PC-9 (cell line): ENCODE measurements at regions of chr1 and their contacts with region 1.

Region 1: DNA sequence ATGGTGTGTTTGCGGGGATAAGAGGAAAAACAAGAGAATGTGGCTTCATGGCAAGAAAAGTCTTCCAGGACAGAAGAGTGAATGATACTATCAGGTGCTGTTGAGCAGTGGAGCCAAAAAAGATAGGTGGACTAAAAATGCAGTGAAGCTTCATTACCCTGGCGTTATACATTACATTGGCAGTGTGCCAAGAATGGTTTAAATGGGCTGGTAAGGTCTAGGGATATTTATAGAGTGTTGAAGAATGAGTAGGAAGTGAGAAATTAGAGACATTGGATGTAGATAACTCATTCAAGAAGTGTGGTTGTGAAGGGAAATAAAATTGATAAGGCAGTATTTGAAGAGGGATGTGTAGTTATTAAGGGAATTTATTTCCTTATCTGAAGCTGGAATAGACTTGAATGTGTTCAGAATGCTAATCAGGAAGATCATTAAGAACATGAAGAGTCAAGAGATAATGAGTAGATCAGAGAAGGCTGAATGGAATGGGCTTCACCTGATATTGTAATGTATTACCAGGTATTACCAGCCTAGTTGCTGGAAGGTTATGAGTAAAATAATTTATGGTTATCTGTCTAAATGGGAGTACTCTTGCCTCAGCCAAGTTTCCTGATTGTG is 72.7 kb downstream of the MAST2 start:
- DNase-seq: no peak
- H3K4me3 ChIP-seq: no peak overlapping the region
- H3K27ac ChIP-seq: no peak overlapping the region
- H3K4me1 ChIP-seq: peaks cover 18% of the 10 kb centered on the region
- H3K27me3 ChIP-seq: no peaks in the 10 kb centered on the region
- CTCF ChIP-seq: no peak

Region 2: DNA sequence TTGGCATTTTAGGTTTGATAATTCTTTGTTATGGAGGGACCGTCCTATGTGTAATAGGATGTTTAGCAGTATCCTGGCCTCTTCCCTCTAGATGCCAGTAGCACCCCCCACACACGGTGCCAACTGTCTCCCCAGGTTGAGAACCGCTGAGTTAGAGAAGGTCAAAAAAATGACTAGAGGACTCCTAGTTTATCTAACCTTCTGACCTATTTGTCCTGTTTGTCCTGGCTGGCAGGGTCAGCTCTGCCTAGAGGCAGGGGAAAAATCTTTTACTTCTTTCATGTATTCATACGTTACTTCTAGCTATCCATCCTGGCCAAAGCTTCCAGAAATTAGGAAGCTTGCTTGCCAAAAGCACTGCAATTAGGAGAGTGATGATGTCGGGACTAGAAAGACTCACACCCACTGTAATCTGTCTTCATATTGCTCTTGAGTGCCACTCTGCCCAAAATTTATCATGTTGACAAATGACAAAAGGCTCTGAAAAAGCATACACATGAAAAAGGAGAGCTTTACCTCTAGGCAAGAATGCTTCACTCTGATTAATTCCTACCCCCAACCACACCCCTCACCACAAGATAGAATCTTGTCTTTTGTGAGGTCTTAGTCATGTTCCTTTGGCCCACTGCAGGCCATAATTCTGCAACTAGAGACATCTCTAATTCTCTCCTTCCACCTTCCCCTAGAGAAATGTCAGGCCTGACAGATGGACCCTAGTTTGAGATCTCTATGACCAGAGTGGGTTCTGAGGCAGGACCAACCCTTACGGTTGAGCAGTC is 339.9 kb before region 1 on chr1:
- CTCF ChIA-PET with region 1: no interaction called
- POLR2A ChIA-PET with region 1: no interaction called
- intact Hi-C with region 1: no loop called
- DNase-seq: no peak
- H3K4me3 ChIP-seq: no peak overlapping the region
- H3K27ac ChIP-seq: no peak overlapping the region
- H3K4me1 ChIP-seq: peaks cover 13% of the 10 kb centered on the region
- H3K27me3 ChIP-seq: no peaks in the 10 kb centered on the region
- CTCF ChIP-seq: no peak

Region 3: GRCh38 chr1:45617618-45618017 is 258.5 kb before region 1 on chr1:
- CTCF ChIA-PET with region 1: interaction called, 10 read pairs
- POLR2A ChIA-PET with region 1: no interaction called
- intact Hi-C with region 1: no loop called
- DNase-seq: no peak
- H3K4me3 ChIP-seq: no peak overlapping the region
- H3K27ac ChIP-seq: no peak overlapping the region
- H3K4me1 ChIP-seq: no peaks in the 10 kb centered on the region
- H3K27me3 ChIP-seq: no peaks in the 10 kb centered on the region
- CTCF ChIP-seq: no peak

Region 4: GRCh38 chr1:45730475-45731339 is 145.4 kb before region 1 on chr1:
- CTCF ChIA-PET with region 1: no interaction called
- POLR2A ChIA-PET with region 1: no interaction called
- intact Hi-C with region 1: loop called (anchors 10 kb)
- DNase-seq: peak; percentile 37 to 89
- H3K4me3 ChIP-seq: no peak overlapping the region
- H3K27ac ChIP-seq: peak overlapping the region; percentile 23
- H3K4me1 ChIP-seq: peaks cover 28% of the 10 kb centered on the region
- H3K27me3 ChIP-seq: no peaks in the 10 kb centered on the region
- CTCF ChIP-seq: no peak

Region 5: DNA sequence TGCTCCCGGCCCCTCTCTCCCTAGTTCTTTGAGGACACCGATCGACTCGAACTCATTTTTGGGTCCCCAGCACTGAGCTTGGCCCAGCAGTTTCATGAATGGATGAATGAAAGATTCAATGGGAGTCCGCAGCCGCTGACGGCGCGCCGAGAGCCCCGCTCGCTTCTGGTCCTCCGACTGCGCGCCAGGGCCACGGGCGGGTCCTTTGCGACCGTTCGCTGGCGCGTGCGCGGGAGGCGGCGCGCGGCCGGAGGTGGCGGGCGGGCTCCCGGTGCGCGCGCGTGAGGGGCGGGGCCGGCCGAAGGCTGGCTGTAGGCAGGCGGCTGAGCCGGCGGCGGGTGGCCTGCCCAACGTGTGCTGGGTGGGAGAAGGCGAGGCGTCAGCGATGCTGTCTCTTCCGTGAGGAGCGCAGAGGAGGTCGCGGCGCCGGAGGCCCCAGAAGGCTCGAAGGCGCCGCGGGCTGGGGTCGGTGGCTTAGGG is 72.8 kb before region 1 on chr1 and contains the start of gene MAST2:
- CTCF ChIA-PET with region 1: interaction called, 4 read pairs
- POLR2A ChIA-PET with region 1: no interaction called
- intact Hi-C with region 1: loop called (anchors 2 kb)
- DNase-seq: peak; percentile 59 to 95
- H3K4me3 ChIP-seq: peak within 1 kb of the TSS; percentile 67
- H3K27ac ChIP-seq: peak within 1 kb of the TSS; percentile 70
- H3K4me1 ChIP-seq: peaks cover 19% of the 10 kb centered on the region
- H3K27me3 ChIP-seq: no peaks in the 10 kb centered on the region
- CTCF ChIP-seq: no peak
- total RNA-seq, gene MAST2: 58.8 and 69.3 TPM in 2 replicates

Region 6: GRCh38 chr1:45929257-45929687 is 53.2 kb after region 1 on chr1:
- CTCF ChIA-PET with region 1: no interaction called
- POLR2A ChIA-PET with region 1: interaction called, 25 read pairs
- intact Hi-C with region 1: no loop called
- DNase-seq: peak; percentile 21 to 84
- H3K4me3 ChIP-seq: no peak overlapping the region
- H3K27ac ChIP-seq: peak overlapping the region; percentile 28
- H3K4me1 ChIP-seq: peaks cover 23% of the 10 kb centered on the region
- H3K27me3 ChIP-seq: no peaks in the 10 kb centered on the region
- CTCF ChIP-seq: no peak